Heart right ventricle (tissue), 16 donors: ENCODE measurements at regions of chr20 and their contacts with region 1.

Region 1: GRCh38 chr20:18587665-18588573 is at the start of gene DTD1:
- DNase-seq: peak; percentile 94 to 97
- ATAC-seq: peak; percentile 96 to 99 (median 98)
- H3K4me3 ChIP-seq: peak within 1 kb of the TSS; percentile 44 to 98 (median 78)
- H3K27ac ChIP-seq: peak within 1 kb of the TSS; percentile 40 to 88 (median 80)
- H3K4me1 ChIP-seq: peaks cover 0 to 19% (median 8%) of the 10 kb centered on the region in 9 donors
- H3K27me3 ChIP-seq: no peaks in the 10 kb centered on the region
- CTCF ChIP-seq: peak; percentile 44 to 86 (median 81)
- total RNA-seq, gene DTD1: 11.0 to 21.7 (median 14.3) TPM

Region 2: GRCh38 chr20:18566892-18567742 is 20.8 kb before region 1 on chr20 and contains the start of gene SMIM26:
- intact Hi-C with region 1: loop called in 1 of 10 experiments (anchors 2 kb)
- DNase-seq: peak; percentile 93 to 94
- ATAC-seq: peak; percentile 99 to 100 (median 100)
- H3K4me3 ChIP-seq: peak within 1 kb of the TSS; percentile 44 to 86 (median 77)
- H3K27ac ChIP-seq: peak within 1 kb of the TSS; percentile 42 to 94 (median 84)
- H3K4me1 ChIP-seq: peaks cover 0 to 20% (median 12%) of the 10 kb centered on the region in 9 donors
- H3K27me3 ChIP-seq: no peaks in the 10 kb centered on the region
- CTCF ChIP-seq: no peak
- total RNA-seq, gene SMIM26: 80.7 to 119 (median 105) TPM